Activated CD4-positive, alpha-beta T cell treated with anti-CD3 and anti-CD28 coated beads for 36 hours (primary cell): ENCODE measurements at regions of chr20 and their contacts with region 1.

Region 1: DNA sequence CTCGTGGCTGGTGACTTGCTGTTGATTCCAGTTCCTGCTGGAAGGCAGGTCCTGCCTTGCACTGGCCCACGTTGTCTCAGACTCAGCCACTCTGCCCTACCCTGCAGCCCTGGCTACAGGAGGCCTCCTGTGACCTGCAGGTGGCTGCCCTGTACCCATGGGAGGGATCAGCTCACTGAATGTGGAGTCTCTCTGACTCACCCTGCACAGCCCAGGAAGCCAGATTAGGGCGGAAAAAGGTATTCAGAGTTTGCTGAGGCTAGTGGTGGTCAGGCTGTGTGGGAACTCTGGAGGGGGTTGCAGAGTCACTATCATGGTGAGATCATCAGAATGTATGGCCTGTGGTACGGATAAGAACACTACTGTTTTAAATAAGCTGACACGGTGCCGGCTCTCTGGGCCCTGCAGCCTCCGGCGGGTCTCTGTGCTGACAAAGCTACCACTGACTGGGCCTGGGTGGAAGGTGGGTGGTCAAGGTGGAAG is 24.7 kb upstream of the PYGB start:
- DNase-seq: peak; percentile 76
- ATAC-seq: peak; percentile 97
- H3K4me3 Mint-ChIP-seq: no peak overlapping the region
- H3K27ac Mint-ChIP-seq: peak overlapping the region; percentile 42
- H3K4me1 Mint-ChIP-seq: peaks cover 7% of the 10 kb centered on the region
- H3K27me3 Mint-ChIP-seq: no peaks in the 10 kb centered on the region

Region 2: GRCh38 chr20:25237610-25238318 is 14.5 kb after region 1 on chr20:
- CTCF ChIA-PET with region 1: interaction called, 3 read pairs
- POLR2A ChIA-PET with region 1: no interaction called
- intact Hi-C with region 1: loop called in 1 of 2 experiments (anchors 1 kb)
- DNase-seq: peak; percentile 82
- ATAC-seq: peak; percentile 97
- H3K4me3 Mint-ChIP-seq: peak overlapping the region; percentile 56
- H3K27ac Mint-ChIP-seq: peak overlapping the region; percentile 96
- H3K4me1 Mint-ChIP-seq: peaks cover 30% of the 10 kb centered on the region
- H3K27me3 Mint-ChIP-seq: peaks cover 12% of the 10 kb centered on the region

Region 3: DNA sequence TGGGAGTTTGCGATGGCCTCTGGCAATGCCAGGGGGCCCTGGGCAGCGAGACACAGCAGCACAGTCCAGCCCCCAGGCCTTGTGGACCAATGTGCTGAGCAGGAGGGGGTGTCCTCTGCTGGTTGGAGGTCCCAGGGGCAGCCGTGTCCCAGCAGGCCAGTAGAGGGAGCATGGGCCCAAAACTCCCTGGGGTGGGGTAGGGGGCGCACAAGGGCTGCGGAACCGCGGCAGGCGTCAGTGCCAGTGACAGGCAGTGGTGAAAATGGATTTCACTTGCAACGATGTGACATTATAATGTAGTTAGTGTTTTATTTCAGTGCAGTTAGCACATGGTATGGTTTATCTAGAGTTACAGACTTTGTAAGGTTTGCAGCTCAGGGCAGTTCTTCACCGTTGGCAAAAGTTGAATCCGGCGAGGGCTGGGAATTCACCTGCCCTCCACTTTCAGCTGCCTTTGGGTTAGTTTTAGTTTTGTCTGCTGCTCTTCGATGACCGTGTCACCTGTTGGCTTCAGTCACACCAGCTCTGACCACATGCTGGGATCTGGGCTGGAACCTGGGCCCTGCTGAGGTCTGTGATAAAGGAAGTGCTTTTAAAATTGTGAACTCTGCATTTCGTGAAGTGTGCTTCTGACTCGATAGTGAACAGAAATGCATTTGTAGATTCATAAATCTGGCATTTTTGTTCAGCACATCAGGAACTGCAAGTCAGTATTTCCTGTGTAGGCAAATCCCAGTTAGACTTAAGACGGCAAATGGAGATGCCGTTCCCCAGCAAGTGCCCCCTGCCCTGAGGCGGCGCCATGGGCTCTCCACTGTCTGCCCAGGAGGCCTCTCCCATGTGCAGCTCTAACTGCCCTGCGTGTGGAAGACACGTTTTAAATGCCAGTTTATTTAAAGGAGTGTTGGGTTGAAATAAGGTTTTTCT is 71.5 kb after region 1 on chr20:
- CTCF ChIA-PET with region 1: no interaction called
- POLR2A ChIA-PET with region 1: no interaction called
- intact Hi-C with region 1: loop called in 1 of 2 experiments (anchors 2 kb)
- DNase-seq: peak; percentile 78
- ATAC-seq: peak; percentile 91
- H3K4me3 Mint-ChIP-seq: no peak overlapping the region
- H3K27ac Mint-ChIP-seq: no peak overlapping the region
- H3K4me1 Mint-ChIP-seq: no peaks in the 10 kb centered on the region
- H3K27me3 Mint-ChIP-seq: no peaks in the 10 kb centered on the region